ENCODE measurements at regions of chr13 and their contacts with region 1.

Region 1: DNA sequence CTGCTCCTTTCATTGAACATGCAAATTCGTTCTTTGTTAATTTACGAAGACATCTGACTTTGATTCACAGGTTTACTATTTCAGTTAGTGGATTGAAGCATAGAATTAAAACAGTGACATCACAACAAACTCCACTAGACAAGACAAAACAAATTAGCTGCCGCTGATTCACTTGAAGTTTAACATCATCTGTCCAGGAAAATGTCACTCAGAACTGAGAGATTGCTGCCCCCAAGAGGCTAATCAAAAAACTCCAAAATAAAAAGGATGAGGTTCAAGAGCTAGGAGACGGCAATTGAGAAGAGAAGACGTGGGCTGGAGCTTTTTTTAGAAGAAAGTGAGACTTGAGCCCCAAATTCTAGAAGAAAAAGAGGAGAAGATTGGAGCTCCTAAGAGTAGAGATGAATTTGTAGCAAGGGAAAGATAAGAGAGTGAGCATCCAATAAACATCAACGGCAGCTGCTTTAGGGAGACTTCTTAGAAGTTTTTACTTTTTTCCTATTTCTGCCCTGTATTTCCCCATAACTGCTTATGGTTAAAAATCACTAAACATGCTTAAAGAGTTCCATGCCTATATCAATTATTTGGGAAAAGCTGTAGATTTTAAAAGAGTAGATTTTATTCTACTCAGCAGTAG is 40.8 kb upstream of the TPP2 start:
- DNase-seq: peak; percentile 52
- H3K4me3 ChIP-seq: no peak overlapping the region
- H3K27ac ChIP-seq: no peak overlapping the region
- H3K4me1 ChIP-seq: no peaks in the 10 kb centered on the region
- H3K27me3 ChIP-seq: peaks cover 2 to 3% of the 10 kb centered on the region in 2 experiments
- CTCF ChIP-seq: peak; percentile 28 to 47
- POLR2A ChIP-seq: no peak

Region 2: GRCh38 chr13:101785858-101786257 is 770.2 kb before region 1 on chr13:
- CTCF ChIA-PET with region 1: interaction called, 18 read pairs
- POLR2A ChIA-PET with region 1: no interaction called
- dilution Hi-C with region 1: no loop called
- intact Hi-C with region 1: no loop called
- DNase-seq: no peak
- H3K4me3 ChIP-seq: no peak overlapping the region
- H3K27ac ChIP-seq: no peak overlapping the region
- H3K4me1 ChIP-seq: no peaks in the 10 kb centered on the region
- H3K27me3 ChIP-seq: peaks cover 3 to 17% of the 10 kb centered on the region in 2 experiments
- CTCF ChIP-seq: no peak
- POLR2A ChIP-seq: no peak

Region 3: GRCh38 chr13:101942038-101942437 is 614.0 kb before region 1 on chr13:
- CTCF ChIA-PET with region 1: interaction called, 41 read pairs
- POLR2A ChIA-PET with region 1: no interaction called
- dilution Hi-C with region 1: no loop called
- intact Hi-C with region 1: loop called (anchors 1 kb)
- DNase-seq: peak; percentile 28
- H3K4me3 ChIP-seq: no peak overlapping the region
- H3K27ac ChIP-seq: no peak overlapping the region
- H3K4me1 ChIP-seq: no peaks in the 10 kb centered on the region
- H3K27me3 ChIP-seq: no peaks in the 10 kb centered on the region
- CTCF ChIP-seq: peak; percentile 37 to 38
- POLR2A ChIP-seq: no peak

Region 4: DNA sequence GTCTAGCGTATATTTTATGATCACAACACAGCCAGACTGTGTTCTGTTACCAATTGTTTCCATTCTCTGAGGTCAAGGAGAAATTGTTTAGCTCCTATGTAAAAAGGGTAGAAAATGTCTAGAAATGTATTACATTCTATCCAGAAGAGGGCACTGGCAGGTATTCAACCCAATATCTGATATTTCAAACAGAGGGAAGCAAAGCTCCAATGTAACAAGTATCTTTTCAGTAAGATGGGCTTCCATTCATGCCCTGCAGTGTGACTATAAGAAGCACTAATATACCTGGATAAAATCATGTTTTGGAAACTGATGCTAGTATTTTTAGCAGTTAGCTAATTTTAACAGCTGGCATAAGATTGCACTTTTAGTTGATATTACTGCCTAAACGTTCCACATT is 466.9 kb before region 1 on chr13:
- CTCF ChIA-PET with region 1: interaction called, 22 read pairs
- POLR2A ChIA-PET with region 1: no interaction called
- dilution Hi-C with region 1: no loop called
- intact Hi-C with region 1: no loop called
- DNase-seq: no peak
- H3K4me3 ChIP-seq: no peak overlapping the region
- H3K27ac ChIP-seq: no peak overlapping the region
- H3K4me1 ChIP-seq: no peaks in the 10 kb centered on the region
- H3K27me3 ChIP-seq: no peaks in the 10 kb centered on the region
- CTCF ChIP-seq: no peak
- POLR2A ChIP-seq: no peak

Region 5: GRCh38 chr13:102141625-102142472 is 414.2 kb before region 1 on chr13:
- CTCF ChIA-PET with region 1: interaction called, 264 read pairs
- POLR2A ChIA-PET with region 1: no interaction called
- dilution Hi-C with region 1: no loop called
- intact Hi-C with region 1: loop called (anchors 1 kb)
- DNase-seq: peak; percentile 25
- H3K4me3 ChIP-seq: no peak overlapping the region
- H3K27ac ChIP-seq: no peak overlapping the region
- H3K4me1 ChIP-seq: no peaks in the 10 kb centered on the region
- H3K27me3 ChIP-seq: peaks cover 0 to 2% of the 10 kb centered on the region in 2 experiments
- CTCF ChIP-seq: peak; percentile 48 to 51
- POLR2A ChIP-seq: no peak

Region 6: DNA sequence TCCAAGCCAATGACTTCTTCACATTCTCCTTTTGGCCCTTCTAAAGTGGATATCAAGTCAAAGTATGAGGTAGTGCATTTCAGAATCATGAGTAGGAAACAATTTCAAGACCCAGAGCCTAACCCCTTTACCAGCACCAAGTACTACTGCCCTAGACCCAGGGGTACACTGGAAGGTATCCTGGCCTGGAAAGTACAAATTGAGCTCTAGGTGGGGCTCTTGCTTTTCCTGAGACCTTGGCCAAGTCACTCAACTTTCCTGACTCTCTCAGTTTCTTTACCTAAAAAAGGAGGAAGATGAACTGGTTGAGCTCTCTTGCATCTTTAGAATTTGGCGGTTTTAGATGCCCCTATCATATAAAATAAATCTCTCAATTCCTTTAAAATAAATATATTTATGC is 358.8 kb before region 1 on chr13:
- CTCF ChIA-PET with region 1: interaction called, 5 read pairs
- POLR2A ChIA-PET with region 1: no interaction called
- dilution Hi-C with region 1: no loop called
- intact Hi-C with region 1: loop called (anchors 5 kb)
- DNase-seq: no peak
- H3K4me3 ChIP-seq: no peak overlapping the region
- H3K27ac ChIP-seq: no peak overlapping the region
- H3K4me1 ChIP-seq: peaks cover 30% of the 10 kb centered on the region
- H3K27me3 ChIP-seq: no peaks in the 10 kb centered on the region
- CTCF ChIP-seq: no peak
- POLR2A ChIP-seq: no peak

Region 7: GRCh38 chr13:102571075-102571474 is 15.0 kb after region 1 on chr13:
- CTCF ChIA-PET with region 1: interaction called, 28 read pairs
- POLR2A ChIA-PET with region 1: no interaction called
- dilution Hi-C with region 1: no loop called
- intact Hi-C with region 1: no loop called
- DNase-seq: no peak
- H3K4me3 ChIP-seq: no peak overlapping the region
- H3K27ac ChIP-seq: no peak overlapping the region
- H3K4me1 ChIP-seq: no peaks in the 10 kb centered on the region
- H3K27me3 ChIP-seq: peaks cover 13 to 18% of the 10 kb centered on the region in 2 experiments
- CTCF ChIP-seq: no peak
- POLR2A ChIP-seq: no peak

Region 8: DNA sequence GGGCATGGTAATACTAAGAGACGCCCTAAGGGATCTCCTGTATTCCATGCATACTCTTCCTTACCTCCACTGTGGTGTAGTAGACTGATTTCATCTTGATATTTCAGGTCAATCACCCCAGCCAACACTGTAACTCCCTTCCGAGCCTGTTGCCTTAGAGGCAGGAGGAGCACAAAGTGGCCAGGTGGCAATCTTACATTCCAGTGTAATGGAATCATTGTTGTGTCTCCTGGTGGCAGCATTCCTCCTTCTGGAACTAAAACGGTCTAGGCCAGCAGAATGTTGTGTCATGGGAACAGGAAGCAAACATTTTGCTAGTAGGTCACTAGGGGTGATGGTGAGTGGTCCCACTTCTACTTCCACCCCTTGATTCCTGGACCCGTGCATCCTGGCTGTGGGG is 915.9 kb after region 1 on chr13:
- CTCF ChIA-PET with region 1: no interaction called
- POLR2A ChIA-PET with region 1: no interaction called
- dilution Hi-C with region 1: no loop called
- intact Hi-C with region 1: no loop called
- DNase-seq: no peak
- H3K4me3 ChIP-seq: no peak overlapping the region
- H3K27ac ChIP-seq: no peak overlapping the region
- H3K4me1 ChIP-seq: no peaks in the 10 kb centered on the region
- H3K27me3 ChIP-seq: no peaks in the 10 kb centered on the region
- CTCF ChIP-seq: no peak
- POLR2A ChIP-seq: no peak